ENCODE measurements at regions of chr15 and their contacts with region 1.

Region 1: GRCh38 chr15:88274553-88275460 is 18.3 kb upstream of the NTRK3 start:
- DNase-seq: peak; percentile 22
- H3K4me3 Mint-ChIP-seq: no peak overlapping the region
- H3K27ac Mint-ChIP-seq: no peak overlapping the region
- H3K4me1 Mint-ChIP-seq: no peaks in the 10 kb centered on the region
- H3K27me3 Mint-ChIP-seq: peaks cover 14% of the 10 kb centered on the region

Region 2: GRCh38 chr15:88246666-88247446 is 28.0 kb before region 1 on chr15:
- intact Hi-C with region 1: loop called (anchors 1 kb)
- DNase-seq: peak; percentile 42
- H3K4me3 Mint-ChIP-seq: no peak overlapping the region
- H3K27ac Mint-ChIP-seq: no peak overlapping the region
- H3K4me1 Mint-ChIP-seq: no peaks in the 10 kb centered on the region
- H3K27me3 Mint-ChIP-seq: peaks cover 6% of the 10 kb centered on the region